K562 (cell line): ENCODE measurements at regions of chr5 and their contacts with region 1.

Region 1: DNA sequence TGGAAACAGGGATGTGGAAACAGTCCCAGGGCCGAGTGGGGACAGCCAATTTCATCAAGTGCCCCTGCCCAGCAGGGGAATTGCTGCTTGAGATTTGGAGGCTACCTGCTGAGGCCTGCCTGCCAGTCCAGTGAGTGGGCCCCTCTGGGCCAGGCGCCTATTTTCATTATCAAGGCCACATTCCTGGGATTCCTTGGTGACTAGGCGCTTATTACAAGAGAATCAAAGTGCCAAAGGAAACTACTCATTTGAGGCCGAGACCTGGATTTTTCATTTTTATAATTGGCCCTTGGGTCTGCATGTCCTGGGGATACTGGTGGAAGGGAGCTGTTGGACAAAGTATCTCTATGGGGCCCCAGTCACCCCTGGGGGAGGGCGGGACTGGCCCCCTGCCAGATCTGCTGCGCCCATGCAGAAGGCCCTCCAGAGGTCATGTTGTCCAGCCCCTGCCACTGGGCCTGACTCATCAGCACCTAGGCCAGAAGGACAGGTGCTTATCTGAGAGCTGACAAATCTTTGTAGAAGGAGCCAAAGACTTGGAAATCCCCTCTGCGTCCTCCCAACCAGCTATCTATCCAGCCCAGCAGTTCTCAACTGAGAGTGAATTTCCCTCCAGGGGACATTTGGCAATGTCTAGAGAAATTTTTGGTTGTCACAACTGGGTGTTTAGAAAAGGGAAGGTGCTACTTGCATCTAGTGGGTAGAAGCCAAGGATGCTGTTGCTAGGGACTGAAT is 45.6 kb downstream of the FOXI1 start:
- DNase-seq: peak; percentile 90 to 95 (median 94)
- ATAC-seq: peak; percentile 95
- H3K4me3 ChIP-seq: no peak overlapping the region
- H3K27ac ChIP-seq: no peak overlapping the region
- H3K4me1 ChIP-seq: peaks cover 12 to 17% of the 10 kb centered on the region in 2 experiments
- H3K27me3 ChIP-seq: peaks cover 0 to 35% of the 10 kb centered on the region in 2 experiments; a peak in 3 of 5 replicates
- CTCF ChIP-seq: no peak
- EP300 ChIP-seq: peak; percentile 91
- POLR2A ChIP-seq: no peak
- RAD21 ChIP-seq: no peak

Region 2: DNA sequence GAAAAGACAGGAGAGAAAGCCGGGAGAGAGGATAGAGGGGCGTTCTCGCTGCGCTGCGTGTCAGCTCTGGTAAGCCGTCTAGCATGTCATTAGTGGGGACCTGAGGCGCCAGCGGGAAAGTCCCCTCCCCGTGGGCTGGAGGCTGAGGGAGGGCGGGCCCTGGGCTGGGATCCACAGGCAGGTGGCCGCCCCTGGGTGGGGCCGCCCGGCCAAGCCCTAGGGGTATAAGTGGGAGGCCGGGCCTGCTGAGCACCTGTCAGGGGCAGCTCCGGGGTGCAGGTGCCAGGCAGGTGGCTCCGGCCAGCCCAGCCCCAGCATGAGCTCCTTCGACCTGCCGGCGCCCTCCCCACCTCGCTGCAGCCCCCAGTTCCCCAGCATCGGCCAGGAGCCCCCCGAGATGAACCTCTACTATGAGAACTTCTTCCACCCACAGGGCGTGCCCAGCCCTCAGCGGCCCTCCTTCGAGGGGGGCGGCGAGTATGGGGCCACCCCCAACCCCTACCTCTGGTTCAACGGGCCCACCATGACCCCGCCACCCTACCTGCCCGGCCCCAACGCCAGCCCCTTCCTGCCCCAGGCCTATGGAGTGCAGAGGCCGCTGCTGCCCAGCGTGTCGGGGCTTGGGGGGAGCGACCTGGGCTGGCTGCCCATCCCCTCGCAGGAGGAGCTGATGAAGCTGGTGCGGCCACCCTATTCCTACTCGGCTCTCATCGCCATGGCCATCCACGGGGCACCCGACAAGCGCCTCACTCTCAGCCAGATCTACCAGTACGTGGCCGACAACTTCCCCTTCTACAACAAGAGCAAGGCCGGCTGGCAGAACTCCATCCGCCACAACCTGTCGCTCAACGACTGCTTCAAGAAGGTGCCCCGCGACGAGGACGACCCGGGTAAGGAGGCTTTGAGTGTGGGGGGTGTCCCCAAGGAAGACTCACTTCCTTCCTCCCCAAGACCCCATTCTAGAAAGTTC is 45.3 kb before region 1 on chr5 and contains the start of gene FOXI1:
- CTCF ChIA-PET with region 1: no interaction called
- POLR2A ChIA-PET with region 1: no interaction called
- in situ Hi-C with region 1: no loop called
- intact Hi-C with region 1: loop called (anchors 5 kb)
- DNase-seq: peak in 1 of 4 experiments; percentile 17
- ATAC-seq: peak; percentile 49; the same call in 2 of the 3 replicates
- H3K4me3 ChIP-seq: no peak within 1 kb of the TSS
- H3K27ac ChIP-seq: no peak within 1 kb of the TSS
- H3K4me1 ChIP-seq: peaks cover 0 to 3% of the 10 kb centered on the region in 2 experiments; a peak in 1 of 5 replicates
- H3K27me3 ChIP-seq: peaks cover 0 to 50% of the 10 kb centered on the region in 2 experiments; a peak in 3 of 5 replicates
- CTCF ChIP-seq: no peak
- EP300 ChIP-seq: no peak
- POLR2A ChIP-seq: no peak
- RAD21 ChIP-seq: no peak
- polyA plus RNA-seq, gene FOXI1: not detected